GM12878 (cell line): ENCODE measurements at regions of chr3 and their contacts with region 1.

Region 1: DNA sequence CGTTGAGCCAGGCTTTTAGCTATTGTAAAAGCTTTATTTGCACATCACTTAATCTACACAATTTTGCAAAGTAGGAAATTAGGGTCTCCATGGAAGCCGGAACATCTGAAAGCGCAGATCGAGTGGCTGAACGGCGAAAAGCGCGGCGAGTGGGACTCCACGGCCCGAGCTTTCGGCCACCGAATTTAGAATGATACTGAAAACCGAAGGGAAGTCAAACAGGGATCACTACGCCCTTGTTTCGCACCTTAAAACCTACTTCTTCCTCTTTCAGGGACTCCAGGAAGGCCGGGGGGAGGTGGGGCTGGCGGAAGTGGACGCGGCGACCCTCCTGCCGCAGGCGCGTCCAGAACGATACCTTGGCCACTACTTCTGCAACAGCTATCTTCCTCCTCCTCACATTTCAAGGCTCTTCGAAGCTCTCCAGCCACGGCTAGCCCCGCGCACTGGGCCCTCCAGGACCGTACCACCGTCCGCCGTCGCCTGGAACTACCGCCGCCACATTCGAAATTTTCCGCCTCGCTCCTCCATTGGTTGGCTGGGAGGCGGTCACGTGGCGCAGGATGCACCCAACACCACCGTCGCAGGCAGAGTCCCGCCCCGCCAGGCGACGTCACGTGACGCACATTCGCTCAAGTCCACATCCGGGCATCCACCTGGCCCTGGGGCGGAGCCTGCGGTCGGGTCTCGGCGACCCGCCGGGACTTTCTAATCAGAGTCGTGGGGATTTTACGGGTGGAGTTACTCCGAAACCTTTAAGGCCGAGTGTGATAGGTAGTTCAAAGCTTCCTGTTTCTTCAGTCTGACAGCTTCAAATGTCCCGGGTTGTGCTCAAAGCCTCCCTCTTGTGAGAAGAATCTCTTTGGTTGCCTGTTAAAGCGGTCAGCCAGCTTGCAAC is at the start of gene SGO1:
- DNase-seq: peak; percentile 97
- ATAC-seq: peak; percentile 90
- H3K4me3 ChIP-seq: peak within 1 kb of the TSS; percentile 80
- H3K27ac ChIP-seq: peak within 1 kb of the TSS; percentile 89
- H3K4me1 ChIP-seq: no peaks in the 10 kb centered on the region
- H3K27me3 ChIP-seq: no peaks in the 10 kb centered on the region
- CTCF ChIP-seq: no peak
- EP300 ChIP-seq: peak in 1 of 2 experiments; percentile 17; a peak in 1 of 4 replicates
- POLR2A ChIP-seq: peak; percentile 93
- RAD21 ChIP-seq: peak; percentile 29; the same call in 1 of the 2 replicates
- polyA plus RNA-seq, gene SGO1: 12.3 to 14.0 TPM

Region 2: DNA sequence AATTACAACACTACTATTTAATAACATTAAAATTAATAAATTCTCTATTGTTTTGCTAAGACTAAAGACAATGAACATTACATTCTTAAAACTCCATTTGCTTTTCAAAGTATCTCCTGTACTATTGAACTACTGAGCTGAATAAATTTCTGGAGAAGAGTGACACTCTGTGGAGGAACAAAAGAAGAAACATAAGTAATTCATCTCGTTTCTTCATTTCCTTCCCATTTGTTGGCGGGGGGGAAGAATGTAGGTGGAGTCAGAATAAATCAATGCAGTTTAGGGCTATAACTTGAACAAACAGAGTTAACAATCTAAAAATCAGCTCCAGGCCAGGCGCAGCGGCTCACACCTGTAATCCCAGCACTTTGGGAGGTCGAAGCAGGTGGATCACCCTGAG is 284.6 kb before region 1 on chr3:
- CTCF ChIA-PET with region 1: no interaction called
- POLR2A ChIA-PET with region 1: no interaction called
- RAD21 ChIA-PET with region 1: no interaction called
- SMC1A ChIA-PET with region 1: no interaction called
- in situ Hi-C with region 1: no loop called
- intact Hi-C with region 1: no loop called
- DNase-seq: no peak
- ATAC-seq: no peak
- H3K4me3 ChIP-seq: no peak overlapping the region
- H3K27ac ChIP-seq: no peak overlapping the region
- H3K4me1 ChIP-seq: no peaks in the 10 kb centered on the region
- H3K27me3 ChIP-seq: no peaks in the 10 kb centered on the region
- CTCF ChIP-seq: no peak
- EP300 ChIP-seq: no peak
- POLR2A ChIP-seq: no peak
- RAD21 ChIP-seq: no peak

Region 3: GRCh38 chr3:19946832-19947548 is 239.0 kb before region 1 on chr3 and contains the start of gene RAB5A:
- CTCF ChIA-PET with region 1: interaction called, 6 read pairs
- POLR2A ChIA-PET with region 1: interaction called, 5 read pairs
- RAD21 ChIA-PET with region 1: interaction called, 5 read pairs
- SMC1A ChIA-PET with region 1: interaction called, 5 read pairs
- in situ Hi-C with region 1: loop called (anchors 5 kb)
- intact Hi-C with region 1: loop called (anchors 1 kb)
- DNase-seq: peak; percentile 94
- ATAC-seq: peak; percentile 92
- H3K4me3 ChIP-seq: peak within 1 kb of the TSS; percentile 89
- H3K27ac ChIP-seq: peak within 1 kb of the TSS; percentile 91
- H3K4me1 ChIP-seq: peaks cover 3% of the 10 kb centered on the region; the same call in 1 of the 2 replicates
- H3K27me3 ChIP-seq: no peaks in the 10 kb centered on the region
- CTCF ChIP-seq: no peak
- EP300 ChIP-seq: peak in 1 of 2 experiments; percentile 31; a peak in 1 of 4 replicates
- POLR2A ChIP-seq: peak; percentile 90
- RAD21 ChIP-seq: no peak
- polyA plus RNA-seq, gene RAB5A: 15.8 to 16.2 TPM

Region 4: GRCh38 chr3:20054549-20054987 is 131.4 kb before region 1 on chr3:
- CTCF ChIA-PET with region 1: no interaction called
- POLR2A ChIA-PET with region 1: interaction called, 3 read pairs
- RAD21 ChIA-PET with region 1: interaction called, 6 read pairs
- SMC1A ChIA-PET with region 1: interaction called, 4 read pairs
- in situ Hi-C with region 1: loop called (anchors 10 kb)
- intact Hi-C with region 1: loop called (anchors 5 kb)
- DNase-seq: peak; percentile 82
- ATAC-seq: peak; percentile 90
- H3K4me3 ChIP-seq: no peak overlapping the region
- H3K27ac ChIP-seq: no peak overlapping the region
- H3K4me1 ChIP-seq: peaks cover 21% of the 10 kb centered on the region
- H3K27me3 ChIP-seq: no peaks in the 10 kb centered on the region
- CTCF ChIP-seq: no peak
- EP300 ChIP-seq: no peak
- POLR2A ChIP-seq: no peak
- RAD21 ChIP-seq: no peak

Region 5: GRCh38 chr3:20125897-20126296 is 60.1 kb before region 1 on chr3:
- CTCF ChIA-PET with region 1: interaction called, 3 read pairs
- POLR2A ChIA-PET with region 1: interaction called, 7 read pairs
- RAD21 ChIA-PET with region 1: interaction called, 10 read pairs
- SMC1A ChIA-PET with region 1: interaction called, 30 read pairs
- in situ Hi-C with region 1: no loop called
- intact Hi-C with region 1: loop called (anchors 1 kb)
- DNase-seq: peak; percentile 71
- ATAC-seq: peak; percentile 99
- H3K4me3 ChIP-seq: peak overlapping the region; percentile 27; the same call in 1 of the 2 replicates
- H3K27ac ChIP-seq: peak overlapping the region; percentile 62
- H3K4me1 ChIP-seq: peaks cover 14% of the 10 kb centered on the region
- H3K27me3 ChIP-seq: no peaks in the 10 kb centered on the region
- CTCF ChIP-seq: no peak
- EP300 ChIP-seq: peak; percentile 56 to 71; a peak in 2 of 4 replicates
- POLR2A ChIP-seq: no peak
- RAD21 ChIP-seq: no peak